Activated T-helper 1 cell treated with anti-CD3 and anti-CD28 coated beads, Interleukin-12 subunit alpha, Interleukin-12 subunit beta, Interleukin-2, Interleukin-4 antibody, amounts not matched to agents 30 ng/mL and 10 ng/mL and 1 ng/mL, durations not matched to agents 14 hours and 24 hours and 36 hours (primary cell): ENCODE measurements at regions of chr19 and their contacts with region 1.

Region 1: GRCh38 chr19:10653715-10654492 is at the start of gene ILF3:
- DNase-seq: peak; percentile 100
- H3K4me3 Mint-ChIP-seq: peak within 1 kb of the TSS; percentile 92
- H3K27ac Mint-ChIP-seq: peak within 1 kb of the TSS; percentile 96
- H3K4me1 Mint-ChIP-seq: peaks cover 29% of the 10 kb centered on the region
- H3K27me3 Mint-ChIP-seq: peaks cover 6% of the 10 kb centered on the region
- total RNA-seq, gene ILF3: 536 and 558 TPM in 2 replicates

Region 2: GRCh38 chr19:10194500-10195289 is 459.2 kb before region 1 on chr19 and contains the start of gene DNMT1:
- intact Hi-C with region 1: loop called (anchors 10 kb)
- DNase-seq: peak; percentile 97
- H3K4me3 Mint-ChIP-seq: peak within 1 kb of the TSS; percentile 97
- H3K27ac Mint-ChIP-seq: peak within 1 kb of the TSS; percentile 97
- H3K4me1 Mint-ChIP-seq: peaks cover 16% of the 10 kb centered on the region
- H3K27me3 Mint-ChIP-seq: no peaks in the 10 kb centered on the region
- total RNA-seq, gene DNMT1: 411 and 425 TPM in 2 replicates

Region 3: DNA sequence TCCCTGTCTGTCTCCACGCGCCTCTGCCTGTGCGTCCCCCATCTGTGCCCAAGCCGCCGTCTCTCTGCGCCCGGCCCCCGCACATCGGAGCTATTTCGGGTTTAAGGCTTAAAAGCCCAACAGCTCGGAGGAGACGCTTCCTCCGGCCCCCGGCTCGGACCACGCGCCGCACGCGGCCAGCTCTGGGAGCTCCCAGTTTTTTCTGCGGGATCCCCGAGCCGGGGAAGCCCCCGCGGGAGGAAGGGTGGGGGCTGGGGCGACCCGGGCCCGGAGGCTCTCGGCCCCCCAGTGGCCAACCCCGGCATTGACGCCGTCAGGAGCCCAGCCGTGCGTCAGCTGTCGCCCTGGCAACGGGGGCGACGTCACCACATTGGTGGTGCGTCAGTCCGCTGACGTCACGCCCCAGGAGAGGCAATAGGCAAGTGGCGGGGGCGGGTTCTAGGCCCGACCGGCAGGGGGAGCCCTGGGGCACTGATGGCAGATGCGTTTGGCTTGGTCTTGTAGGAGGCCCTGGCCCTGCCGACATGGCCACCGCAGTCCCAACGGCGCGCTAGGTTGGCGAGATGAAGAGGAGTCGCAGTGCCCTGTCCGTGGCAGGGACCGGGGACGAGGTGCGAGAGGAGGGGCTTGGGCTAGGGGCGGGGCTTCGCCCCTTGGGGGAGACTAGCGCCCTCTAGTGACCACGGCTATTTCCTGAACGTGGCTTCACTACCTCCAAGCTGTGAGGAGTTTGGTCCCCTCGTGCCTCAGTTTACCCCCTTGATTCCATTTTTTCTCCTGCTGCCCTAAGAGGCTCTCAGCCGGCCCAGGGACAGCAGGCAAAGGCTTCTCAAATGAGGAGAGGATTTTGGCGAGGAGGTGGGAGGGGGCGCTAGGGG is 237.3 kb before region 1 on chr19:
- intact Hi-C with region 1: loop called (anchors 5 kb)
- DNase-seq: peak; percentile 94
- H3K4me3 Mint-ChIP-seq: peak overlapping the region; percentile 81
- H3K27ac Mint-ChIP-seq: peak overlapping the region; percentile 94
- H3K4me1 Mint-ChIP-seq: peaks cover 51% of the 10 kb centered on the region
- H3K27me3 Mint-ChIP-seq: peaks cover 4% of the 10 kb centered on the region

Region 4: DNA sequence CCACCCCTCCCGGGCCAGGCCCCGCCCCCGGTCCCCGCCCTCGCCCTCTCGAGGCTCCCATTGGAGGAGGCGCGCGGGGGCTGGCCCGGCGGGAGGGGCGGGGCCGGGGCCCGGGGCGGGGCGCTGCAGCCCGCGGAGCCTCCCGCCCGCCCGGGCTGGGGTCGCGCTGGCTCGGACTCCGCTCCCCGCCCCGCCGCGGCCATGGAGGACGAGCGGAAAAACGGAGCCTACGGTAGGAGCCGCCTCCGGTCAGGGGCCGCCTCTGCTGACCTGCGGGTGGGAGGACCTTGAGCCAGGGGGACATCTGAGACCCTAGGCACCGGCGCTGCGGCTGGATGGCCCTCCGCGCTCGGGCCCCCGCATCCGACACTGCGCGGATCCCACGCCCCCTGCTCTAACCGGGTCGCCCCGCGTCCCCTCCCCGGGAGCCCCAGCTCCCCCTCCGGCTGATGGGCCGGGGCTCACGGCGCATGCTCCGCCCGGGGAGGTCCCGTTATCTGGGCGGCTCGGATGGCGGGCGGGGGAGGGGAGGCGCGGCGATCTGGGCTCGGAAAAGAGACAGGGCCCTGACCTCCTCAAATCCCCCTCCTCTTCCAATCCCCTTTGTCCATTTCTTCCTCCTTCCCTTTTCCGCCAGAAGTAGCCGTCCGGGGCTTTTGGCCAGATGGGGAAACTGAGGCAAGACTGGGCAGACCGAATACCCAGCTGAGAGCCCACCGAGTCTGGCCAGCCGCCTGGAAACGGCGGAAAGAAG is 51.4 kb before region 1 on chr19:
- intact Hi-C with region 1: loop called (anchors 1 kb)
- DNase-seq: peak; percentile 75
- H3K4me3 Mint-ChIP-seq: peak overlapping the region; percentile 99
- H3K27ac Mint-ChIP-seq: peak overlapping the region; percentile 100
- H3K4me1 Mint-ChIP-seq: peaks cover 24% of the 10 kb centered on the region
- H3K27me3 Mint-ChIP-seq: peaks cover 8% of the 10 kb centered on the region

Region 5: GRCh38 chr19:10690341-10690781 is 36.5 kb after region 1 on chr19:
- intact Hi-C with region 1: no loop called
- DNase-seq: no peak
- H3K4me3 Mint-ChIP-seq: no peak overlapping the region
- H3K27ac Mint-ChIP-seq: no peak overlapping the region
- H3K4me1 Mint-ChIP-seq: peaks cover 12% of the 10 kb centered on the region
- H3K27me3 Mint-ChIP-seq: no peaks in the 10 kb centered on the region

Region 6: GRCh38 chr19:10797541-10798256 is 143.8 kb after region 1 on chr19:
- intact Hi-C with region 1: loop called (anchors 2 kb)
- DNase-seq: peak; percentile 92
- H3K4me3 Mint-ChIP-seq: peak overlapping the region; percentile 89
- H3K27ac Mint-ChIP-seq: peak overlapping the region; percentile 99
- H3K4me1 Mint-ChIP-seq: peaks cover 58% of the 10 kb centered on the region
- H3K27me3 Mint-ChIP-seq: no peaks in the 10 kb centered on the region

Region 7: DNA sequence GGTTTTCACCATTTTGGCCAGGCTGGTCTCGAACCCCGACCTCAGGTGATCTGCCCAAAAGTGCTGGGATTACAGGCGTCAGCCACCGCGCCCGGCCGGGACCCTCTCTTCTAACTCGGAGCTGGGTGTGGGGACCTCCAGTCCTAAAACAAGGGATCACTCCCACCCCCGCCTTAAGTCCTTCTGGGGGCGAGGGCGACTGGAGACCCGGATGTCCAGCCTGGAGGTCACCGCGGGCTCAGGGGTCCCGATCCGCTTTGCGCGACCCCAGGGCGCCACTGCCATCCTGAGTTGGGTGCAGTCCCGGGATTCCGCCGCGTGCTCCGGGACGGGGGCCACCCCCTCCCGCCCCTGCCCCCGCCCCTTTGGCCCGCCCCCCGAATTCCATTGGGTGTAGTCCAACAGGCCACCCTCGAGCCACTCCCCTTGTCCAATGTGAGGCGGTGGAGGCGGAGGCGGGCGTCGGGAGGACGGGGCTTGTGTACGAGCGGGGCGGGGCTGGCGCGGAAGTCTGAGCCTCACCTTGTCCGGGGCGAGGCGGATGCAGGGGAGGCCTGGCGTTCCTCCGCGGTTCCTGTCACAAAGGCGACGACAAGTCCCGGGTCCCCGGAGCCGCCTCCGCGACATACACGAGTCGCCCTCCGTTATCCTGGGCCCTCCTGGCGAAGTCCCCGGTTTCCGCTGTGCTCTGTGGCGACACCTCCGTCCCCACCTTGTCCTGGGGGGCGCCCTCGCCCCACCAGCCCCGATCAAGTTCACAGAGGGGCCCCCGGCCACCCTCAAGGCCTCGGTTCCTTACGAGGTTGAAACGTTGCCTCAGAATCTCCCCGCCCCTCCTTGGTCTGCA is 436.4 kb after region 1 on chr19:
- intact Hi-C with region 1: loop called (anchors 5 kb)
- DNase-seq: peak; percentile 97
- H3K4me3 Mint-ChIP-seq: peak overlapping the region; percentile 98
- H3K27ac Mint-ChIP-seq: peak overlapping the region; percentile 99
- H3K4me1 Mint-ChIP-seq: peaks cover 45% of the 10 kb centered on the region
- H3K27me3 Mint-ChIP-seq: no peaks in the 10 kb centered on the region